Right ventricle myocardium superior (tissue), 1 donor: ENCODE measurements at regions of chr1 and their contacts with region 1.

Region 1: GRCh38 chr1:186618401-186619170 is 61.6 kb downstream of the PTGS2 start:
- DNase-seq: peak; percentile 73
- ATAC-seq: peak; percentile 91

Region 2: DNA sequence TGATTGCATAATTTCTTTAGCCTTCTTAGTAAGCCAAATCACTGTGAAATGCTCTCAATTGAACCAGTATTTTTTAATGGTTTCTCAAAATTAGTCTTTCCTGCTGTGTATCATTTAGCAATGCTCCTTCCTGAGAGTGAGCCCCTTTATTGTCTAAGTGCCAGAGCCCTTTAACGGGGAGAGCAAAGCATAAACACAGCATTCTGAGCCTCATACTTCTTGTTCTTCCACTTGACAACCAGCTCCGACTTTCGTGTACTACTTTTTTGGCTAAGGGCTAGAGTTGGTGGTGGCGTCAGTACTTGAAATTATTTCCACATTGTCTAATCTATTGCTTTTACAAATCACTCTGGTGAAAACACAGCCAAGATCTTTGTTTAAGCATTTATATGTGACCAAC is 542.6 kb before region 1 on chr1:
- intact Hi-C with region 1: no loop called
- DNase-seq: no peak
- ATAC-seq: no peak

Region 3: GRCh38 chr1:186482661-186483255 is 135.8 kb before region 1 on chr1:
- intact Hi-C with region 1: no loop called
- DNase-seq: peak; percentile 43
- ATAC-seq: peak; percentile 81

Region 4: GRCh38 chr1:186680245-186681061 is 61.9 kb after region 1 on chr1 and contains the start of gene PTGS2:
- intact Hi-C with region 1: no loop called
- DNase-seq: peak; percentile 85
- ATAC-seq: peak; percentile 98
- total RNA-seq, gene PTGS2: 1.0 TPM

Region 5: GRCh38 chr1:186806477-186806876 is 187.9 kb after region 1 on chr1:
- intact Hi-C with region 1: loop called (anchors 10 kb)
- DNase-seq: no peak
- ATAC-seq: no peak